Lower leg skin (tissue), 4 donors: ENCODE measurements at regions of chr2 and their contacts with region 1.

Region 1: DNA sequence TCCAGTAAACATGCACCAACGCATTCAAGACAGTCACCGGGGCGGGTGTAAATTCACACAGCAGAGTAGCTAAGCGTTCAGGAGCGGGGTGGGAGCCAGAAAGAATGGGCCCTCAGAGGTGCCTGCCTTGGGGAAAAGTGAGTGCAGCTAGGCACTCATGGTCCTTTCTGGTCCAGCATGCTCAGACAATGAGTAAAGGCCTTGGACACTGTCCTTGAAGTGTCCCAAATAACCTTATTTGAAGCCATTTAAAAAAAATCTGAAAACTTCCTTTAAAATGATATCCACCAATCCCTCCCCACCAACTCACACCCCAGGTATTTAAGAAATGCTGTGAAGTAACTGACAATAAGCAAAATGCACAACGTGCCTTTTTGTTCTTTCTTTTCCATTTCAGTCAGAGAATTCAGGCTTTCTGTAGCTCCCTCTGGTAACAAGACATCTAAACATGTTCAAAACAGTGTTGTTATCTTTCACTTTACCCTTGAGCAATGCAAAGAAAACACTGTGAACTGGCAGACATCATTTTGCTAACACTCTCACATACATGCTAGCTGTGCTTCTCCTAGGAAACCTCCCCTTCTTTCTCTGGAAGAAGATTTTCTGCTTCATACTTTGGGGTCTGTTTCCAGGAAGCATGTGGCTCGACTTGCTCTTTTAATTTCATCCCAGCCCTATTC is 445.1 kb upstream of the SPRED2 start:
- DNase-seq: no peak
- H3K4me3 ChIP-seq: no peak overlapping the region
- CTCF ChIP-seq: no peak
- POLR2A ChIP-seq: no peak

Region 2: DNA sequence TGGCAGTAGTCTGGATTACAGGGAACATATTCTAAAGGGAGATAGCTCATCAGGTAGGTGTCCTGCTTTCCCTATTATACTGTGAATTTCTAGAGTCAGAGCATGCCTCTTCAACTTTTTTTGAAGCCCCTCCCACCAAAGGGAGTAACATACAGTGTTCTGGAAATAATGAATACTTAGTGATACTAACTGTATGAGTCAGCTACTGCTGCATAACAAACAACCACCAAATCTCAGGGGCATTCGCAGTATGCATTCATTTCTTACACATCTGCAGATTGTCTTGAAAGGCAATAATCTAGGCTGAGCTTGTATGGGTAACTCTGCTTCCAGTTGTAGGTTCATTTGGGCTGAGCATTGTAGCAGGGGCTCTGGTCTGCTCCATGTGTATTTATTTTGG is 35.4 kb before region 1 on chr2:
- intact Hi-C with region 1: loop called (anchors 1 kb)
- DNase-seq: no peak
- H3K4me3 ChIP-seq: no peak overlapping the region
- CTCF ChIP-seq: no peak
- POLR2A ChIP-seq: no peak